ENCODE measurements at regions of chr3 and their contacts with region 1.

Region 1: DNA sequence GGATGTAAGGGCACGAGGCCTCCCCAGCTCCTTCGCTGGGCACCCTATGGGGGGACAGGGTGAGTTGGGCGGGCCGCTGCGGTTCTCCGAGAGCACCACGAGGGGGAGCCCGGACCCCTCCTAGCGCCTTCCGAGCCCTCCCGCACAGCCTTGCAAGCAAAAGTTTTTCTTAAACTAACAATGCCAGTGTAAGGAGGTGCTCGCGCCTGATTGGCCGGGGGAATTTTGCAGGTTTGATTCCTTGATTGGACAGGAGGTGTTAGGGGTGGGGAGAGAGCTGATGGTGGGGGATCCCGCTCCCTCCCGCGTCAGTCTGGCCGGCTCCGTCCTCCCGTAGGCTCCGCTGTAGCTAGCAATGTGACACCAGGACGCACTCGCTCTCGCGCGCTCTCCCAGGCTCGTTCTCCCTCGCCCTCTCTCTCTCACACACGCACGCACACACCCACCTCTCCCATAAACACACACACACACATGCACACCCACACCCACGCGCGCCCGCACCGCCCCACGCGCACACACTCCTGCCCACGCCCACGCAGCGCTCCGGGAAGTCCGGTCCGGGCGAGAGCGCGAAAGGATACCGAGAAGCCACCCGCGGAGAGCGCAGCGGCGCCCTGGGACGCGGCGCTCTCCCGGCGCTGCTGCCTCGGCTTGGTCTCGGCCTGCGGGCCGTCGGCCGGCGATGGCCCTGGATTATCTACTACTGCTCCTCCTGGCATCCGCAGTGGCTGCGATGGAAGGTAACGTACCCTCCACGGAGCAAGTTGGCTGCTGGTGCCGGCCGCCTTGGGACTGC is at the start of gene EPHB1:
- DNase-seq: peak; percentile 86
- H3K4me3 ChIP-seq: peak within 1 kb of the TSS; percentile 55
- H3K27me3 ChIP-seq: peaks cover 16% of the 10 kb centered on the region
- CTCF ChIP-seq: peak; percentile 97
- polyA plus RNA-seq, gene EPHB1: 0.36 and 0.50 TPM in 2 replicates

Region 2: DNA sequence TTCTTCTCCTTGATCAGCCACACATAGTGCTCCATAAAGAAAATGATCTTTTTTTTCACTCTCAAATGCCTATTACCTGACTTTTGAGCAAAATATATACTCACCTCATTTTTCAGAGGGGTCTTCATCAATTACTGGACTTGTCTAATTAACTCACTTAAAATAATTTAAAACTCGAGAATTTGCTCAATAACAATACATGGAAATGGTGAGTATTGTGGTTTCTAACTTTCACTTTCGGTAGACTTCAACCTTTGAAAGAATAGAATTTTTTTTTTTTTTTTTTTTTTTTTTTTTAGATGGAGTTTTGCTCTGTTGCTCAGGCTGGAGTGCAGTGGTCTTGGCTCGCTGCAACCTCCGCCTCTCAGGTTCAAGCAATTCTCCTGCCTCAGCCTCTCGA is 17.8 kb before region 1 on chr3:
- CTCF ChIA-PET with region 1: interaction called, 13 read pairs
- POLR2A ChIA-PET with region 1: no interaction called
- DNase-seq: no peak
- H3K4me3 ChIP-seq: no peak overlapping the region
- H3K27me3 ChIP-seq: no peaks in the 10 kb centered on the region; the same call in 1 of the 2 replicates
- CTCF ChIP-seq: no peak

Region 3: GRCh38 chr3:135503760-135504686 is 708.9 kb after region 1 on chr3:
- CTCF ChIA-PET with region 1: interaction called, 78 read pairs
- POLR2A ChIA-PET with region 1: no interaction called
- DNase-seq: peak; percentile 9
- H3K4me3 ChIP-seq: no peak overlapping the region
- H3K27me3 ChIP-seq: no peaks in the 10 kb centered on the region; the same call in 1 of the 2 replicates
- CTCF ChIP-seq: peak; percentile 85

Region 4: DNA sequence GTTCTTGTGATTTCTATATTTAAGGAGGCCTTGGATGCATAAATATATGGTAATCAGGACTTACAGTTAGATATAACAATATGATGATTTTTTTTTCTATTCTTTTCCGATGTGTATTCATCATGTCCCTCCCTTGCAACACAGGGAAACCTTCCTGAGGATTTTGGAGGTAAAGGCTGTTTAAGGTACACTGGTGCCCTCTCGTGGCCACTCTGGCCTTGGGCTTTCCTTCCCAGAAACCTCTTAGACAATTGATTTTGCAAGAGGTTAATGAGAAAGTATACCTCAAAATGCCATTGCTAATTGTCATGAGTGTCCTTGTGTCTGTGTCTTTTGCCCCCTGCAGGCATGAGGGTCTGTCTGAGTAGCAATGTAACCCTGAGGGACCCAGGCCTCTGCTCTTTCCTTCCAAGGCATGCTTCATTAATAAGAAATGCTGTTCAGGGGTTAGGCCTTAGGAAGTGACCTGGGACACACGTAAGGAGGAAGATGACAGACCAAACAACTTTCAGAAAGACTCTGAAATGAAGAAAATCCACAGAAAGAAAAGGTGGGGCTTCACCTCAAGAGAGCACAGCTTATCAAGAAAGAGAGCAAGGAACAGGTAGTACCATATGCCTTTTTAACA is 1100.1 kb after region 1 on chr3:
- CTCF ChIA-PET with region 1: interaction called, 15 read pairs
- POLR2A ChIA-PET with region 1: no interaction called
- DNase-seq: no peak
- H3K4me3 ChIP-seq: no peak overlapping the region
- H3K27me3 ChIP-seq: no peaks in the 10 kb centered on the region
- CTCF ChIP-seq: peak; percentile 89